Activated CD8-positive, alpha-beta T cell treated with anti-CD3 and anti-CD28 coated beads for 36 hours (primary cell): ENCODE measurements at regions of chr1 and their contacts with region 1.

Region 1: GRCh38 chr1:206489980-206490770 is 17.2 kb upstream of the RASSF5 start:
- DNase-seq: peak; percentile 84
- ATAC-seq: peak; percentile 98
- H3K4me3 Mint-ChIP-seq: no peak overlapping the region
- H3K27ac Mint-ChIP-seq: peak overlapping the region; percentile 42
- H3K4me1 Mint-ChIP-seq: peaks cover 2% of the 10 kb centered on the region
- H3K27me3 Mint-ChIP-seq: no peaks in the 10 kb centered on the region
- CTCF ChIP-seq: peak; percentile 86

Region 2: GRCh38 chr1:206075786-206076755 is 414.1 kb before region 1 on chr1:
- CTCF ChIA-PET with region 1: no interaction called
- POLR2A ChIA-PET with region 1: no interaction called
- intact Hi-C with region 1: no loop called
- DNase-seq: no peak
- ATAC-seq: no peak
- H3K4me3 Mint-ChIP-seq: no peak overlapping the region
- H3K27ac Mint-ChIP-seq: no peak overlapping the region
- H3K4me1 Mint-ChIP-seq: peaks cover 10% of the 10 kb centered on the region
- H3K27me3 Mint-ChIP-seq: peaks cover 8% of the 10 kb centered on the region
- CTCF ChIP-seq: no peak

Region 3: DNA sequence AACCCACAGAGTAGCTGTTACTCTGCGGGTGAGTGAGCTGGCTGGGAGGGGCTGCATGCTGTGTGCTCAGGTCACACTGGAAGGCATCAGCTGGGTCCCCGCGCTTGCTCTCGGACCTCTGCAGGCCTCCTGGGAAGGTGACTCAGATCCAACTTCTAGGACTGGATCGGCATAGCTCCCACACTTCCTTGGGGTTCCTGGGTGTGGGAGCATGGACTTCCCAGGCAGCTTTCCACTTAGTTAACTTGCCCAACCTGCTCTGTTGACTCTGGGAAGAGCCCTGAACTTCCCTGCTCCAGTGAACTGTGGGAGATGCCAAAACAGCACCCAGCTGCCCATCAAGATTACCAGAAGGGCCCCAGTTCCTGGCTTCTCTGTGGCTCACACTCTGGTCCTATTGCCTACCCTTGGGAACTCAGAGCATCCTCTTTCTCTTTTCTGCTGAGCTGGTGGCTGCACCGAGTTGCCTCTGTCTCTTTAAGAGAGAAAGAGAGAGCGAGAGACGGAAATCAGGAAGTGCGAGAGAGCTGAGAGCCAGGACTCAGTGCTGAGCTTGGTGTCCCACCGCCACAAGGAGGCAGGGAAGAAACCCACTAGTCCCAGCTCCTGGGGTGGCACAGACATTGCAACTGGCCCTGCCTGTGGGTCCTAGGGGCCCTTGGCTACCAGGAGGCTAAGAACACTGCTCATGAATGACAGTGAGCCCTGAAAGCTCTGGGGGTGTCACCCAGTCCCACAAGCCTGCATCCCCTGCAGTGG is 20.1 kb before region 1 on chr1 and contains the start of gene IKBKE:
- CTCF ChIA-PET with region 1: interaction called, 20 read pairs
- POLR2A ChIA-PET with region 1: interaction called, 5 read pairs
- intact Hi-C with region 1: no loop called
- DNase-seq: peak; percentile 62
- ATAC-seq: peak; percentile 21
- H3K4me3 Mint-ChIP-seq: peak within 1 kb of the TSS; percentile 73
- H3K27ac Mint-ChIP-seq: peak within 1 kb of the TSS; percentile 94
- H3K4me1 Mint-ChIP-seq: peaks cover 90% of the 10 kb centered on the region
- H3K27me3 Mint-ChIP-seq: no peaks in the 10 kb centered on the region
- CTCF ChIP-seq: no peak
- total RNA-seq, gene IKBKE: 14.3 to 14.9 TPM

Region 4: GRCh38 chr1:206507284-206508129 is 17.3 kb after region 1 on chr1 and contains the start of gene RASSF5:
- CTCF ChIA-PET with region 1: interaction called, 36 read pairs
- POLR2A ChIA-PET with region 1: interaction called, 7 read pairs
- intact Hi-C with region 1: no loop called
- DNase-seq: peak; percentile 91
- ATAC-seq: peak; percentile 75
- H3K4me3 Mint-ChIP-seq: peak within 1 kb of the TSS; percentile 64
- H3K27ac Mint-ChIP-seq: peak within 1 kb of the TSS; percentile 10
- H3K4me1 Mint-ChIP-seq: peaks cover 46% of the 10 kb centered on the region
- H3K27me3 Mint-ChIP-seq: peaks cover 28% of the 10 kb centered on the region
- CTCF ChIP-seq: no peak
- total RNA-seq, gene RASSF5: 215 to 218 TPM

Region 5: GRCh38 chr1:206590025-206590758 is 100.0 kb after region 1 on chr1:
- CTCF ChIA-PET with region 1: interaction called, 85 read pairs
- POLR2A ChIA-PET with region 1: interaction called, 4 read pairs
- intact Hi-C with region 1: no loop called
- DNase-seq: peak; percentile 85
- ATAC-seq: peak; percentile 96
- H3K4me3 Mint-ChIP-seq: peak overlapping the region; percentile 55
- H3K27ac Mint-ChIP-seq: peak overlapping the region; percentile 97
- H3K4me1 Mint-ChIP-seq: peaks cover 65% of the 10 kb centered on the region
- H3K27me3 Mint-ChIP-seq: no peaks in the 10 kb centered on the region
- CTCF ChIP-seq: peak; percentile 68

Region 6: DNA sequence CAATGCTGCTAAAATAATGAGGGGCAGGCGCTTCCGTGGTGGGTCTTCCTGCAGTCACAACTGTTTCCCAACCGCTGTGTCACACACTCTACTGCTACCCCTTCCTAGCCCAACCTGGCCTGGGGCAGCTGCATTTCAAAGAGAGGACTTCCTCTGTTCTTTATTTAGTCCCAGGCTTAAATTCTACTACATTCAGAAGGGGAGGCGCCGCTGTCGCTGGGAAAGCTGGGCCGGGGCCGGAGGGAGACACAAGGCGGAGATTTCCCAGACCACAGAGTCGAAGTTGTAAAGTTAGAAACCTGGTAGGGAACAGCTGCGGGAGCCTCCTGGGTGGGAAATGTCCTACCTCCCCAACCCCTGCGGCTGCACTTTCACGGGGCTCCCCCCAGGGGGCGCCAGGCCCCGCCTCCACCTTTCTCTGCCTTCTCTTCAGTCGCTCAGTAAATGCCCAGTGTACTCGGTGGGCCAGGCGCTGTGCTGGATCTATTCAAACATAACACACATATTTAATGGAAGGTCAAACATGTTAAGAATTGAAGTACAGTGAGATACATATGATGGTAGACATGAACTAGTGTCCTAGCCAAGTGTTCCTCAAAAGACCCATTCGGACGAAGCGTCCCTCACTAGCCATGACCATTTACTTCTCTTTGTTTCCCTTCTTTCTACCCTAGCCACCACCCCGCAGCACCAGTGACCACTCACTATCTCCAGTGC is 168.2 kb after region 1 on chr1:
- CTCF ChIA-PET with region 1: interaction called, 84 read pairs
- POLR2A ChIA-PET with region 1: interaction called, 4 read pairs
- intact Hi-C with region 1: loop called (anchors 5 kb)
- DNase-seq: peak; percentile 67
- ATAC-seq: peak; percentile 84
- H3K4me3 Mint-ChIP-seq: no peak overlapping the region
- H3K27ac Mint-ChIP-seq: peak overlapping the region; percentile 42
- H3K4me1 Mint-ChIP-seq: peaks cover 29% of the 10 kb centered on the region
- H3K27me3 Mint-ChIP-seq: peaks cover 31% of the 10 kb centered on the region
- CTCF ChIP-seq: peak; percentile 99